ENCODE measurements at regions of chr1 and their contacts with region 1.

Region 1: DNA sequence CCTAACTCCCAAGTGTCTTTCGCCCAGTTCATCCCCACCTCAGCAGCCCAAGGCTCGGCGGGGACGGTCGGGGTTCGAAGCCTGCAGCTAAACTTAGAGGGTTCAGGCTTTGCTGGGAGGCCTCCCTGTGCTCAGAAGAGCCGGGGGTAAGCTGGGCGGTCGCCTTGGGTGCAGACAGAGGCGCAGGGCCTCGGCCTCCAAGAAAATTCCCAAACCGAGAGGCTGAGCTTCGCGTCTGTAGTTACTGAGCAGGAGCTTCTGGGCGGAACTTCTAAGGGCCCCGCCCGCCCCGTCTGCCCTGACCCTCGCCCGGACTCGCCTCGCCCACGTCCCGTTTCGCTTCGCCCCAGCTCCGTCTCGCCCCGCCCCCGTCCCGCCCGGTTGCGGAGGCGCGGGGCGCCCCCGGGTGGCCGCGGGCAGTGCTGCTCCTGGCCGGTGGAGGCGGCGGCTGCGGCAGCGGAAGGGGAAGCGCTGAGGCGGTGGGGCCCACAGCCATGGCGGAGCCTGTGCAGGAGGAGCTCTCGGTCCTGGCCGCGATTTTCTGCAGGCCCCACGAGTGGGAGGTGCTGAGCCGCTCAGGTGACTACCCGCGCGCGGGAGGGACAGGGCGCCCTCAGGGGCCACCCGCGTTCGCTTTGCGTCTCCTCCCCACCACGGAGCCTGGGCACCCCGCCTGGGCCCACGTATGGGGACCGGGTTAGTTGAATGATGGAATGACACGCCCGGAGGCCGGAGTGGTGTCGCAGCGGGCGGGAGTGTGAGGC is at the start of gene RWDD3:
- DNase-seq: peak; percentile 97
- H3K4me3 ChIP-seq: peak within 1 kb of the TSS; percentile 86 to 92
- H3K27ac ChIP-seq: peak within 1 kb of the TSS; percentile 55 to 86; a peak in 3 of 4 replicates
- H3K4me1 ChIP-seq: peaks cover 13 to 17% of the 10 kb centered on the region in 2 experiments; a peak in 3 of 4 replicates
- H3K27me3 ChIP-seq: no peaks in the 10 kb centered on the region
- CTCF ChIP-seq: peak; percentile 77
- EP300 ChIP-seq: no peak
- RAD21 ChIP-seq: peak; percentile 77
- polyA plus RNA-seq, gene RWDD3: 11.9 and 19.5 TPM in 2 replicates

Region 2: GRCh38 chr1:95049935-95050334 is 184.0 kb before region 1 on chr1:
- CTCF ChIA-PET with region 1: interaction called, 17 read pairs
- POLR2A ChIA-PET with region 1: no interaction called
- DNase-seq: no peak
- H3K4me3 ChIP-seq: no peak overlapping the region
- H3K27ac ChIP-seq: peak overlapping the region in 1 of 2 experiments; percentile 79; a peak in 2 of 4 replicates
- H3K4me1 ChIP-seq: peaks cover 0 to 13% of the 10 kb centered on the region in 2 experiments; a peak in 2 of 4 replicates
- H3K27me3 ChIP-seq: no peaks in the 10 kb centered on the region
- CTCF ChIP-seq: no peak
- EP300 ChIP-seq: no peak
- RAD21 ChIP-seq: no peak

Region 3: DNA sequence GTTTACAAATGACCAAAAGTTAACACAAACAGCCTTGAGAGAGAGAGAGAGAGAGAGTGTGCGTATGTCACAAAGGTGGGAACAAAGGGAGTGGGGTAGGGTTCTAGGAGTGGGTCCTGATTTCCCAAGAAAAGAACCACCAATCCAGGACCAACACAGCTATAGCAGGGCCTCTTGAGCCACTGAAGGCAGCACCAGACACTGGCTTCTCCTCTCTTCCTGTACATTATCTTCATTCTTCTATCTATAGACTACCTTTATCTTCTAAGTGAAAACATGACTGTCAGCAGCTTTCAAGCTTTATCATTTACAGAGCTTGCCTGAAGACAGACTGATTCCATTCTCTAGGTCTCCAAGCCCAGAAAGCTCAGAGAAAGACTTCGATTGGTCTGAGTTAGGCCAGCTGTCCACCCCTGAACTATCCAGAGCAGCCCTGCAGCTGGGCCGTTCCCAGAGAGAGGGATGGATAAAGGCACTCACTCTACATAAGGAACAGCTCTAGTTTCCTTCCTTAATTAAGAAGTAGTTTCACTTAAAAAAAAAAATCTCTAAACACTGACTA is 172.4 kb before region 1 on chr1:
- CTCF ChIA-PET with region 1: no interaction called
- POLR2A ChIA-PET with region 1: no interaction called
- DNase-seq: no peak
- H3K4me3 ChIP-seq: no peak overlapping the region
- H3K27ac ChIP-seq: no peak overlapping the region
- H3K4me1 ChIP-seq: no peaks in the 10 kb centered on the region
- H3K27me3 ChIP-seq: no peaks in the 10 kb centered on the region
- CTCF ChIP-seq: no peak
- EP300 ChIP-seq: no peak
- RAD21 ChIP-seq: no peak

Region 4: GRCh38 chr1:95084317-95085176 is 149.4 kb before region 1 on chr1:
- CTCF ChIA-PET with region 1: interaction called, 13 read pairs
- POLR2A ChIA-PET with region 1: no interaction called
- DNase-seq: peak; percentile 61
- H3K4me3 ChIP-seq: no peak overlapping the region
- H3K27ac ChIP-seq: no peak overlapping the region
- H3K4me1 ChIP-seq: peaks cover 5% of the 10 kb centered on the region in 2 experiments; a peak in 2 of 4 replicates
- H3K27me3 ChIP-seq: no peaks in the 10 kb centered on the region; the same call in 1 of the 2 replicates
- CTCF ChIP-seq: peak; percentile 68
- EP300 ChIP-seq: no peak
- RAD21 ChIP-seq: peak; percentile 53

Region 5: GRCh38 chr1:95179205-95179986 is 54.5 kb before region 1 on chr1:
- CTCF ChIA-PET with region 1: interaction called, 12 read pairs
- POLR2A ChIA-PET with region 1: interaction called, 3 read pairs
- DNase-seq: peak; percentile 39
- H3K4me3 ChIP-seq: no peak overlapping the region
- H3K27ac ChIP-seq: peak overlapping the region in 1 of 2 experiments; percentile 40; a peak in 2 of 4 replicates
- H3K4me1 ChIP-seq: peaks cover 0 to 7% of the 10 kb centered on the region in 2 experiments; a peak in 2 of 4 replicates
- H3K27me3 ChIP-seq: no peaks in the 10 kb centered on the region
- CTCF ChIP-seq: no peak
- EP300 ChIP-seq: no peak
- RAD21 ChIP-seq: no peak

Region 6: DNA sequence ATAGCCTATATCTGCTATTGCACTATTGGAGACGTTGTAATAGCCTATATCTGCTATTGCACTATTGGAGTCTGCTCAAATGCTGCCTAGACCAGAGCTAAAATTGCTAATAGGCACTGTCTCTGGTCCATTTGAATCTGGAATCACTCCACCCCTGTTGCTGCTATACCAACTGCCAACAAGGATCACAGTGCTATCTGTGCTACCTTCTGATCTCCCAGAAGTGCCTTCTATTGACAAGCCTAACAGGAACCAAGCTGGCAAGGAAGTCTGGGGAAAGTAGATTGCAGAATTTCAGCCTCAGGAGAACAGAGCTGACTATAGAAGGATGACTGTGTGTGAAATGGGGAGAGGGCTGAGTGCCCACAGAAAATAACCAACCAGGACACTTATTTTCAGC is 16.0 kb after region 1 on chr1:
- CTCF ChIA-PET with region 1: interaction called, 36 read pairs
- POLR2A ChIA-PET with region 1: interaction called, 8 read pairs
- DNase-seq: no peak
- H3K4me3 ChIP-seq: no peak overlapping the region
- H3K27ac ChIP-seq: no peak overlapping the region
- H3K4me1 ChIP-seq: peaks cover 0 to 4% of the 10 kb centered on the region in 2 experiments; a peak in 1 of 4 replicates
- H3K27me3 ChIP-seq: no peaks in the 10 kb centered on the region
- CTCF ChIP-seq: no peak
- EP300 ChIP-seq: no peak
- RAD21 ChIP-seq: no peak

Region 7: DNA sequence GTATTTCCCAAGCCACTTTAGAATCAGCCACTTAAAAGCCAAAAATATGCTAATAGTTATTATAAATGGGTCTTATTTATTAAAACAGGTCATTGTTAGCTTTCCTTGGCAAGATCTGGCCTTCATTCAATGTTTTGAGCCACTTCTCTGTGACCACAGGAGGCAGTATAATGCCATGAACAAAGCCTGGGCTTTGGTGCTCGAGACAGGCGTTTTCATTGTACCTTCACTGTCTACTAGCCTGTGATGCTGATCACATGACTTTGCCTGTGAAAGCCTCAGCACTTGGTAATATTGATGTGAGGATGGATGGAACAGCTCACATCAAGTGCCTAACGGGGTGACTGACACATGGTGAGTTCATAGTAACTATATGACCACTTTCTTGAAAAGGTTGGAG is 217.1 kb after region 1 on chr1:
- CTCF ChIA-PET with region 1: no interaction called
- POLR2A ChIA-PET with region 1: no interaction called
- DNase-seq: no peak
- H3K4me3 ChIP-seq: no peak overlapping the region
- H3K27ac ChIP-seq: no peak overlapping the region
- H3K4me1 ChIP-seq: no peaks in the 10 kb centered on the region
- H3K27me3 ChIP-seq: no peaks in the 10 kb centered on the region
- CTCF ChIP-seq: peak; percentile 19; the same call in 1 of the 2 replicates
- EP300 ChIP-seq: no peak
- RAD21 ChIP-seq: no peak; the same call in 1 of the 2 replicates

Measured in SK-N-SH (cell line).